KBM-7 (cell line): ENCODE measurements at regions of chrX and their contacts with region 1.

Region 1: GRCh38 chrX:122703762-122704161 is 480.3 kb upstream of the GRIA3 start:
- DNase-seq: no peak

Region 2: DNA sequence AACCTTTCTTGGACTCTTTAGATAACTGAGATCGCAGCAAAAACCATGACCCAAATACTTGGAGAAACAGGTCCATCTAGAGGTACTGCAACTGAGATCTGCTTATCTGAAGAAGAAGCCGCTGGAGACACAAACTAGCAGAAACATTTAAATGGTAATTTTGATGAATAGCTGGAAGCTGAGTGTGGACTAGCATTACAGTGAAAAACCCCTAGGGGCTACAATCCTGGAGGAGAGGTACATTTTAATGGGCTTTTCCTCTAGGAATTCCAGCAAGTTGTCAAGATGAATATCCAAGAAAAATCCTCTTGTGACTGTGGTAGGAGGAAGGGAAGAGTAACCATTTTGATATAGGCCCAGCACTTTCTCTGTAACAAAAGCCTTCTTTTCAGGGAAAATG is 112.2 kb before region 1 on chrX:
- in situ Hi-C with region 1: no loop called
- DNase-seq: no peak

Region 3: DNA sequence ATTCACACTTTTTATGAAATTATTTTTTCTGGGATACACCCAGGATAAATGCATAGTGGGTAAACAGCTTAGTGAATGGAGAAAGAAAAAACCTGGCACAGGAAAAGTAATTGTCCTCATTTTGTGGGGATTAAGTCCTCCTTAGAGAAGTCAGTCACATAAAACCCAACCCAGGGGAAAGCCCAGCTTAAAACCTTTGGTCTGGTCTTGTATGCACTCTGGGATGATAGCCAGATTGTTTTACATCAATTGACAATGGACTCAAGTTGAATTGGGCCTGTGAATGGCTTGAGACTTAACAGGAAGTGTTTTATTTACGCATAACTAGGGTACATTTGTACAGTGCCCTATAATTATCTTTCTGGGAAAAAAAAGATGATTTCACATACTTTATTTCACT is 81.0 kb before region 1 on chrX:
- in situ Hi-C with region 1: no loop called
- DNase-seq: no peak

Region 4: DNA sequence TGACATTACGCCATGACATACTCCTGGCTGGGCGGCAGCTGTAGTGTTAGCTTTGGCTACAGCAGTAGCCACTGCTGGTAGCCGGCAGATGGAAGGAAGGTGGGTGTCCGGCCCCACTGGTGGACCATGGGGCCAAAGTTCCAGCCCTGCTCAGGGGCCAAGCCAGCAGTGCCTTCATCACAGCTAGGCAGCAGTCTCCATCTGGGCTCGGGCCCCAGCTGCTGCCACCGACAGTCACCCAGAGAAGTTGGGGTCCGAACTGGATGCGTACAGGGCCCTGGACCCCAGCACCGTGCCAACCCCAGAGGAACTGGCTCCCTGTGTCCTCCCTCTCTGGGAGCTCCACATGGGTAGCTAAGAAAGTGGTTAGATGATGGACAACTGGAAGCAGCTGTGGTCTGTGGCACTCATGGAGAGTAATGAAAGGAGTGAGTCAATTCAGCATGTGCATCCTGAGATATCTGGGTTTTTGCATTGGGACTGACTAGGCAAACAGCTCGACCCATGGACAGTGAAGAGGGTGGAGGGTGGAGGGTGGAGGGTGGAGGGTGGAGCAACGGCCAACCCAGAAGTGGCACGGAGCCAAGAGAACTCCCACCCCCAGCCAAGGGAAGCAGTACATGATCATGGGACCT is 113.7 kb after region 1 on chrX:
- in situ Hi-C with region 1: loop called (anchors 25 kb)
- DNase-seq: no peak